Activated CD4-positive, alpha-beta T cell treated with anti-CD3 and anti-CD28 coated beads for 36 hours (primary cell): ENCODE measurements at regions of chr14 and their contacts with region 1.

Region 1: DNA sequence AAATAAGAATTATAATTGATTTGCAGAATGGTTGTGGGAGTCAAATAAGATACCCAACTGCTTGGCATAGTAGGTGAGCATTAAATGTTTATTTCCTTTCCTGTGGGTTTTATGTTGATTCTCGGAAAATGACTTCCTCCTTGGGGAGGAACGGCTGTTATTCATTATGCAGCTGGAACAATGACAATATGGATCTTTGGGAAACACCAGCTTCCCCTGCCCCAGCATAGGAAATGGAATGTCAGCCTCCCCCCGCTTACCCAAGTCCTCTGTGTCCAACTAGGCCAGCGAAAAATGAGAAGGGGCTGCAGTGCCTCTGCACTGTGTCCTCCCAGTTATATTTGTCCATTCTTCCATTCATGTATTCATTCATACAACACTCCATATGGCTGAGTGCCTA is 11.7 kb upstream of the CCDC177 start:
- DNase-seq: no peak
- ATAC-seq: no peak
- H3K4me3 Mint-ChIP-seq: no peak overlapping the region
- H3K27ac Mint-ChIP-seq: no peak overlapping the region
- H3K4me1 Mint-ChIP-seq: no peaks in the 10 kb centered on the region
- H3K27me3 Mint-ChIP-seq: peaks cover 2% of the 10 kb centered on the region

Region 2: GRCh38 chr14:69441948-69442347 is 144.5 kb before region 1 on chr14:
- CTCF ChIA-PET with region 1: no interaction called
- POLR2A ChIA-PET with region 1: no interaction called
- intact Hi-C with region 1: no loop called
- DNase-seq: no peak
- ATAC-seq: no peak
- H3K4me3 Mint-ChIP-seq: peak overlapping the region; percentile 56
- H3K27ac Mint-ChIP-seq: peak overlapping the region; percentile 68
- H3K4me1 Mint-ChIP-seq: peaks cover 12% of the 10 kb centered on the region
- H3K27me3 Mint-ChIP-seq: no peaks in the 10 kb centered on the region

Region 3: GRCh38 chr14:69708586-69709174 is 122.3 kb after region 1 on chr14:
- CTCF ChIA-PET with region 1: interaction called, 11 read pairs
- POLR2A ChIA-PET with region 1: no interaction called
- intact Hi-C with region 1: no loop called
- DNase-seq: peak; percentile 69
- ATAC-seq: peak; percentile 79
- H3K4me3 Mint-ChIP-seq: no peak overlapping the region
- H3K27ac Mint-ChIP-seq: no peak overlapping the region
- H3K4me1 Mint-ChIP-seq: peaks cover 35% of the 10 kb centered on the region
- H3K27me3 Mint-ChIP-seq: no peaks in the 10 kb centered on the region

Region 4: DNA sequence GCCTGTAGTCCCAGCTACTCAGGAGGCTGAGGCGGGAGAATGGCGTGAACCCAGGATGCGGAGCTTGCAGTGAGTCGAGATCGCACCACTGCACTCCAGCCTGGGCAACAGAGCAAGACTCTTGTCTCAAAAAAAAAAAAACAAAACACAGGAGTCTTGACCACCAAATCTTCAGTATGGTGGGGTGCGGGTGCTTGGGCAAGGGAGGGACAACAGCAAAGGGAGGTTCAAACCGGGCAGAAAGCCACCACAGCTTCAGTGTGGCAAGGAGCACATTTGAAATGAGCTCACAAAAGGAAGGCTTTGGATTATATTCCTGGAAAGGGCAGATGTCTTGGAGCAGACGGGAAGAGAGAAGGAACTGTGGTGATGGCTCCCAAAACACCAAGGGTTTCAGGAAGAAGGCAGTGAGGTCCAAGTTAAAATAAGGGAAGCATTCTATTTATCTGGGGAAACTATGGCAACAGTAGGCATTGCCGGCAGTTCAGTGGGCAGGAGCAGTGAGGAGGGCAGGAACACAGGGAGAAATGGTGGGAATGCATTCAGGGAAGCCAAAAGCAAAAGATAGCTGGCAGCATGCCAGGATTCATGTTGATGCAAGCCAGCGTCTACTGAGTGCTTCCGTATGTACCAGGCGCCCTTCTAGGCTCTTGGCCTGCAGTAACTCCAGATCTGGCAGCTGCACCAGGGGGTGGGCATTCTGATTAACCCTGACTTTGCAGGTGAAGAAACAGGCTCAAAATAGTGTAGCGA is 129.5 kb after region 1 on chr14:
- CTCF ChIA-PET with region 1: interaction called, 13 read pairs
- POLR2A ChIA-PET with region 1: no interaction called
- intact Hi-C with region 1: no loop called
- DNase-seq: peak; percentile 28
- ATAC-seq: peak; percentile 30
- H3K4me3 Mint-ChIP-seq: no peak overlapping the region
- H3K27ac Mint-ChIP-seq: peak overlapping the region; percentile 67
- H3K4me1 Mint-ChIP-seq: peaks cover 38% of the 10 kb centered on the region
- H3K27me3 Mint-ChIP-seq: no peaks in the 10 kb centered on the region